ENCODE measurements at regions of chr17 and their contacts with region 1.

Region 1: GRCh38 chr17:75764711-75765421 is at the start of gene GALK1:
- DNase-seq: peak; percentile 91
- H3K4me3 ChIP-seq: peak within 1 kb of the TSS; percentile 75
- H3K27ac ChIP-seq: peak within 1 kb of the TSS; percentile 22
- H3K4me1 ChIP-seq: peaks cover 18% of the 10 kb centered on the region
- CTCF ChIP-seq: peak; percentile 48
- total RNA-seq, gene GALK1: 88.2 and 99.4 TPM in 2 replicates

Region 2: GRCh38 chr17:75619506-75620431 is 145.1 kb before region 1 on chr17:
- CTCF ChIA-PET with region 1: interaction called, 16 read pairs
- POLR2A ChIA-PET with region 1: no interaction called
- intact Hi-C with region 1: no loop called
- DNase-seq: peak; percentile 33
- H3K4me3 ChIP-seq: no peak overlapping the region
- H3K27ac ChIP-seq: no peak overlapping the region
- H3K4me1 ChIP-seq: no peaks in the 10 kb centered on the region
- CTCF ChIP-seq: peak; percentile 77

Region 3: DNA sequence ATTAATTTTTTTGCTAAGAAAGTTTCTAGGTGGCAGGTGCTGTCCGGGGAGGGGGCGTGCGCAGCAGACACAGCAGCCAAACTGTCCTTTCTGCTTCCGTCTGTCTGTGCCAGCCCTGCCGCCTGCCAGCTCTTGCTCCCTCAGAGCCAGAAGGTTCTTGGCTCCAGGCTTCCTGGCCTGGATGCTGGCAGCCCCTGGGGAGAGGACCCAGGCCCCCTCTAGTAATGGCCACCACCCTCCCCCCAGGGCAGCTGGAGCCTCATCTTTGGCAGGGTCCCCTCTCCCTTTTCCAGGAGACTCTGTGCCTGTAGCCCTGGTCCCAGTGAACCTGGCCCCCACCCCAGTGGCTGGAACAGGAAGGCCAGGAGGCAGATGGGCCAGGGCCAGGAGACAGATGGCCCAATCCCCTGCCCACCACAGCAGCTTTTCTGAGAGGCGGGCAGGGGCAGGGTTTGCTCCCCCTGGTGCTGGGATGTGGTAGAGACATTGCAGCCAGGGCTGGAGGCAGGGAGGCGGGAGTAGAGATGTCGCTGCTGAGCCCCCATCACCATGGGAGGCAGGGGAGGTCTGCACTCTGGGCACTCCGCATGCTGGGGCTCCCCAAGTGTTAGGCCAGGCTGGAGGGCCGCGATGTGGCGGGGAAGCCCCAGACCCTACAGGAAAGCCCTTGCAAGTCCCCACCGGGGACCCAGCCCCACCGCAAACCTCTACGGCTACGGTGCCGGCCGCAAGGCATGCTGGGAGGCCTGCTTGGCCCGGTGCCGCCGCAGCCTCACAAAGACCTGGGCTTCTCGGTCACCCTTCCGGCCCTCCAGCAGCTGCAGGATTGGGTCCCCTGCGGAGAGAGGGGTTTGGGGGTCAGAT is 62.6 kb after region 1 on chr17:
- CTCF ChIA-PET with region 1: interaction called, 6 read pairs
- POLR2A ChIA-PET with region 1: interaction called, 3 read pairs
- intact Hi-C with region 1: loop called (anchors 1 kb)
- DNase-seq: peak; percentile 71
- H3K4me3 ChIP-seq: peak overlapping the region; percentile 39
- H3K27ac ChIP-seq: peak overlapping the region; percentile 9
- H3K4me1 ChIP-seq: peaks cover 20% of the 10 kb centered on the region
- CTCF ChIP-seq: peak; percentile 82

Region 4: DNA sequence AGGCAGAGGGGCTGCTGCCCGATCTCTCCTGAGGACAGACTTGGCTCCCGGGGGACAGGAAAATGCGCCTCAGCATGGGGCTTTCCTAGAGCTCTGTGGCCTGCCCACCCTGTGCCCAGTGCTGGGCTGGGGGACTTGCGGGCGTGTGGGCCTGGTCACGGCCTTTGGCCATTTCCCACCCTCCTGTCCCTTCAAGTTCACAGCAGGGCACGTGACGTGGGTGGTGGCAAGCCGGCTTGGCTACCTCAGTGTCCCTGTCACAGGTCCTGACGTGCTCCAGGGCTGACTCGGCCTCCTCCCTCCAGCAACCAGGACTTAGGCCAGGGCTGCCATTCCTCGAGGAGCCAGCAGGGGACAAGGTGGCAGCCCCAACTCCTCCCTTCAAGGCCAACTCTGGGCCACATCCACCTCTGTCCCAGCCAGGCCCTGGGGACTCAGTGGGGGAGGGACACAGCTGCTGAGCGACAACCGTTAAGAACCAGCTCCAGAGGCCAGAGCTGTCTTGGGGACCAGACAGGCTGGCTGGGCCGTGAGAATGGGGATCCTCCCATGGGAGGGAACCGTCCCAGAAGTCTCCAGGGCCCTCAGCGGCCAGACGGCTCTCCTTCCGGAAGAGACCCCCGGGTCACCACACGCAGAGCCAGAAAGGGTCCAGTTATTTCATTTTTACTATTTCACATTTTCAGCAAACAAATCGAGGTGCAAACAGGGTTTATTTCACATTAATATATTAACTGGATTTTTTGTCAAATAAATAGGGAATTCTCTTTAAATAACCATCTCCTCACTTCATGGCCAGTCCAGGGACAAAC is 80.4 kb after region 1 on chr17:
- CTCF ChIA-PET with region 1: interaction called, 3 read pairs
- POLR2A ChIA-PET with region 1: no interaction called
- intact Hi-C with region 1: loop called (anchors 1 kb)
- DNase-seq: peak; percentile 82
- H3K4me3 ChIP-seq: no peak overlapping the region
- H3K27ac ChIP-seq: no peak overlapping the region
- H3K4me1 ChIP-seq: peaks cover 24% of the 10 kb centered on the region
- CTCF ChIP-seq: peak; percentile 82

Measured in OCI-LY7 (cell line).